Activated CD4-positive, alpha-beta T cell treated with anti-CD3 and anti-CD28 coated beads for 36 hours (primary cell): ENCODE measurements at regions of chr2 and their contacts with region 1.

Region 1: DNA sequence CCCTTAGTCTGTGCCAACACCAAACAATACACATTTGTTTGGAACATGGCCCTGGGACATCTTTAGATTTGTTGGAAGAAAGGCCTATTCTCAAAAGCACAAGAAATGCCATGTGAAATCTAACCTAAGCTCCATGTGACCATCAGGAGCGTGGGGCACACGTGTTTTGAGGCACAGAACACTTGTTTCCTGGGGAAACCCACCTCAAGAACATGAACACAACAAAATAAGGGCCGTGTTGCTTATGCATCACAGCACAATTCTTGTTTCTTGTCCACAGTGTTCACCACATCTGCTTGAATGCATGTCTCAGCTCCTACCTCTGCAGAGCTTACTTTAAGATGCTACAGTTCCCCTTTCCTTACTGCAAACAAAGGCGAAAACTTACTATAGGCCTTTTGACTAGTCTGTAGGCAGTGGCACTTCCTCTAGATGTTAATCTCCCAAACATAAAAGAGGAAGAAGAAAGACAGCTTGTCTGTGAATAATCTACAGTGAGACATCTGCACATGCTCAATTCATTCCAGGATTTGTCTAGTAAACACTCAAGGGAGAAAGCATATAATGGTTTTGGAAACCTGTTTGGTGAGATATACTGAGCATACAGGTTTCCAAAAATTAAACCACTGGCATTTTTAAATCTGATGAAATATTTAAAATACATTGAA is 165.0 kb downstream of the ANKRD44 start:
- DNase-seq: no peak
- ATAC-seq: peak; percentile 81
- H3K4me3 Mint-ChIP-seq: no peak overlapping the region
- H3K27ac Mint-ChIP-seq: peak overlapping the region; percentile 88
- H3K4me1 Mint-ChIP-seq: peaks cover 75% of the 10 kb centered on the region
- H3K27me3 Mint-ChIP-seq: no peaks in the 10 kb centered on the region

Region 2: DNA sequence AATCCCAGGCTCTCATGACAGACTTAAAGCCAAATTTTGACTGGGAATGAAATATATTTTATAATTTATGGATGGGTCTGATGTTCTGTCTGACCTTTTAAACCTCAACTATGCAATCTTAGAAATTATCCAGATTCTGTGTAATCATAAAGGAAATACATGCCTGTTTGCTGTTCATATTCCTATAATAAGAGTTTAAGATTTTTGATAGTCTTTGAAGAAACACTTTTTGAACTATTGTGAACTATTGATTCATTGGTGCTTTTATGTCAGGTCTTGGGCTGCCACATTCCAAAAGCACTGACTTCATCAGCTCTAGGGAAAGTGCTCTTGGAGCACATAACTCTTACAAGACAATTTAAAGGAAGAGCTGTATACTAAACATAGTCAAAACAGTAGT is 441.9 kb before region 1 on chr2:
- CTCF ChIA-PET with region 1: no interaction called
- POLR2A ChIA-PET with region 1: no interaction called
- intact Hi-C with region 1: no loop called
- DNase-seq: no peak
- ATAC-seq: no peak
- H3K4me3 Mint-ChIP-seq: no peak overlapping the region
- H3K27ac Mint-ChIP-seq: no peak overlapping the region
- H3K4me1 Mint-ChIP-seq: no peaks in the 10 kb centered on the region
- H3K27me3 Mint-ChIP-seq: no peaks in the 10 kb centered on the region

Region 3: DNA sequence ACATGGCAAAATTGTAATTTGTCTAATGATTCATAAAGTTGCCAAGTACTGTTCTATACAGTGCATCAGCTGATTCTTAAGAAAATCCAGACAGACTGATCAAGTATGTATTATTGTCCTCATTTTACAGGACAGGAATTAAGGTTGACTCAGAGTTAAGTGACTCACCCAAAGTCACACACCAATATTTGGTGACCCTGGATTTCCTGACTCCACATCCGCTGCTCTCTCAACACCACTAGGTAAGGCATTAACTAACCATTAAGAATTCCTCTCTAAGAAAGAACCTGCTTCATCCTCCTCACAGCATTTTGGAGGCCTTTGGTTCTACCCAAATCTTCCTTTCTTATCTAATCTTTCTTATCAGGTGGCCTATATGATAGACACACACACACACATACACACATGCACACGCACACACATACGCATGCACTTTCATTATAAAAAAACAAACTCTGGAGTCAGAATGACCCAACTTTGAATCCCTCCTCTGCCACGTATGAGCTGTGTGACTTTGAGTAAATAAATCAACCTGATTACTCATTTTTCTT is 14.1 kb after region 1 on chr2:
- CTCF ChIA-PET with region 1: interaction called, 12 read pairs
- POLR2A ChIA-PET with region 1: no interaction called
- intact Hi-C with region 1: loop called in 1 of 2 experiments (anchors 2 kb)
- DNase-seq: peak; percentile 50
- ATAC-seq: peak; percentile 85
- H3K4me3 Mint-ChIP-seq: peak overlapping the region; percentile 14
- H3K27ac Mint-ChIP-seq: peak overlapping the region; percentile 91
- H3K4me1 Mint-ChIP-seq: peaks cover 75% of the 10 kb centered on the region
- H3K27me3 Mint-ChIP-seq: no peaks in the 10 kb centered on the region

Region 4: DNA sequence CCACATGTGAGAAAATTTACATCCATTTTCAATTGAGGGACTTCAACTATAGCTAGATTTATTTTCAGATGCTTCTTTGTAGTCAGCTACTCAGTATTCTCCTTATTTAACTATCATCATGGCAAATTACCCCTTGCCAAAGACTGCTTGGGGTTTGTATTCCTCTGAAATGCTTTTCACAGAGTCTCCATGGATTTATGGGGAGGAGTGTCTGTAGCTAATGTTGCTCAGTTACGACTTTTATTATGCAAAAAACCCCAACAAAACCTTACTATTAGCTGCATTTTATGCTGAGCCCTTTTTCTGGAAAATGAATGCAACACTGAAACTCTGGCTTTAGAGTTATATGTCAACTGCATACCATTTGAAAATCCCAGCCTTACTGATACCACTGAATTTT is 451.2 kb after region 1 on chr2:
- CTCF ChIA-PET with region 1: no interaction called
- POLR2A ChIA-PET with region 1: no interaction called
- intact Hi-C with region 1: no loop called
- DNase-seq: no peak
- ATAC-seq: no peak
- H3K4me3 Mint-ChIP-seq: no peak overlapping the region
- H3K27ac Mint-ChIP-seq: no peak overlapping the region
- H3K4me1 Mint-ChIP-seq: peaks cover 5% of the 10 kb centered on the region
- H3K27me3 Mint-ChIP-seq: peaks cover 12% of the 10 kb centered on the region